T-cell (primary cell): ENCODE measurements at regions of chr9 and their contacts with region 1.

Region 1: GRCh38 chr9:36584622-36585470 is 12.2 kb downstream of the MELK start:
- DNase-seq: no peak
- ATAC-seq: no peak
- H3K4me3 ChIP-seq: no peak overlapping the region
- H3K4me3 Mint-ChIP-seq: no peak overlapping the region
- H3K27ac ChIP-seq: no peak overlapping the region
- H3K27ac Mint-ChIP-seq: no peak overlapping the region
- H3K4me1 ChIP-seq: no peaks in the 10 kb centered on the region
- H3K4me1 Mint-ChIP-seq: no peaks in the 10 kb centered on the region
- H3K27me3 ChIP-seq: no peaks in the 10 kb centered on the region
- H3K27me3 Mint-ChIP-seq: no peaks in the 10 kb centered on the region

Region 2: GRCh38 chr9:37465249-37466036 is 880.6 kb after region 1 on chr9 and contains the start of gene ZBTB5:
- CTCF ChIA-PET with region 1: interaction called in 1 of 2 experiments, 14 read pairs
- POLR2A ChIA-PET with region 1: no interaction called
- DNase-seq: peak; percentile 93 to 99 (median 99)
- ATAC-seq: peak; percentile 81 to 87 (median 84)
- H3K4me3 ChIP-seq: peak within 1 kb of the TSS; percentile 93 to 96
- H3K4me3 Mint-ChIP-seq: peak within 1 kb of the TSS; percentile 91 to 96 (median 94)
- H3K27ac ChIP-seq: peak within 1 kb of the TSS; percentile 97
- H3K27ac Mint-ChIP-seq: peak within 1 kb of the TSS; percentile 91 to 93
- H3K4me1 ChIP-seq: peaks cover 13 to 21% of the 10 kb centered on the region in 2 experiments
- H3K4me1 Mint-ChIP-seq: peaks cover 35 to 42% (median 38%) of the 10 kb centered on the region in 3 donors
- H3K27me3 ChIP-seq: peaks cover 0 to 3% of the 10 kb centered on the region in 2 experiments
- H3K27me3 Mint-ChIP-seq: no peaks in the 10 kb centered on the region
- total RNA-seq, gene ZBTB5: 12.5 to 14.3 (median 13.3) TPM